Vagina (tissue), 2 donors: ENCODE measurements at regions of chr1 and their contacts with region 1.

Region 1: GRCh38 chr1:108512239-108512981 is 47.5 kb upstream of the EEIG2 start:
- DNase-seq: no peak
- H3K4me3 ChIP-seq: no peak overlapping the region
- H3K27ac ChIP-seq: no peak overlapping the region
- H3K4me1 ChIP-seq: no peaks in the 10 kb centered on the region
- H3K27me3 ChIP-seq: no peaks in the 10 kb centered on the region
- CTCF ChIP-seq: peak; percentile 81 to 87 (median 85)
- POLR2A ChIP-seq: no peak

Region 2: GRCh38 chr1:108561731-108562326 is 49.4 kb after region 1 on chr1:
- intact Hi-C with region 1: no loop called
- DNase-seq: no peak
- H3K4me3 ChIP-seq: peak overlapping the region in 1 of 2 donors; percentile 67
- H3K27ac ChIP-seq: no peak overlapping the region
- H3K4me1 ChIP-seq: peaks cover 25% of the 10 kb centered on the region
- H3K27me3 ChIP-seq: no peaks in the 10 kb centered on the region
- CTCF ChIP-seq: peak in 2 of 3 experiments; percentile 22 to 38
- POLR2A ChIP-seq: no peak

Region 3: DNA sequence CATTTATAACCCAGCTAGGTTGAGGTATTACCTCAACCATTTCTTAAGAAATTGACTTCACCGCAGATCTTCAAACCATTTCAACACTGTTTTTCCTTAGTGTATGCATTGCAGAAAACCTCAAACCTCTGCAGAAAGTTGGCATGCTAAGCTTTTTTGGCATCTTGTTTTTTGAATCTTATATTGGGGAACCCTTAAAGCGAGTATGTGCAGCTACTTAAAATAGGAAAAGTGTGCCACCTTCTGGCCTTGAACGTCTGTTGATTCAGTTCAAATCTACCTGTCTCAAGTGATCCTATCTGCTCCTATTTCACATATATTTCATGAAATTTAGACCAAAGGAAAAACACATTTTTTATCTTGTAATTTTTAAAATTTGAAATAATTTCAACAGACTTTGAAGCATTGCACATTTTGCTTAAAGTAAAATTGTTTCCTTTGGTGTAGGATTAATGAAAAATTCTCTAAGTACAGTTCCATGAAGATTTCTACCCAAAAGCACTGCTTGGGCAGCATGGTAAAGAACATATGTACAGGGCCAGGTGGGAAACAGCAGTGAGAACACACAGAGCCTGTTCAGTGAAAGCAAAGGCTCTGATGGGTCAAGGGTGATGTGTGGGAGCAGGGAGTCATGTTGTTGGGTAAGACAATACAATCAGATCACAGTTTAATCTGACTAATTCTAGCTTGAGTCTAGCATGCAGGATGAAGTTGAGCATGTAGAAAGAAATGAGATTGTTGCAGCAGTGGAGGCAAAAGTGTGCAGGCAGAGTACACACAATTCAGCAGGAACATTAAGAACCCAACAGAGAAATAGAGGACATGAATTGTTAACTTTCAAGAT is 131.3 kb after region 1 on chr1:
- intact Hi-C with region 1: loop called (anchors 2 kb)
- DNase-seq: no peak
- H3K4me3 ChIP-seq: no peak overlapping the region
- H3K27ac ChIP-seq: no peak overlapping the region
- H3K4me1 ChIP-seq: peaks cover 15% of the 10 kb centered on the region
- H3K27me3 ChIP-seq: no peaks in the 10 kb centered on the region
- CTCF ChIP-seq: peak; percentile 49 to 70 (median 57)
- POLR2A ChIP-seq: no peak